GM18951 (cell line): ENCODE measurements at regions of chr1 and their contacts with region 1.

Region 1: GRCh38 chr1:173429471-173430402 is 47.4 kb upstream of the PRDX6 start:
- POLR2A ChIP-seq: no peak

Region 2: DNA sequence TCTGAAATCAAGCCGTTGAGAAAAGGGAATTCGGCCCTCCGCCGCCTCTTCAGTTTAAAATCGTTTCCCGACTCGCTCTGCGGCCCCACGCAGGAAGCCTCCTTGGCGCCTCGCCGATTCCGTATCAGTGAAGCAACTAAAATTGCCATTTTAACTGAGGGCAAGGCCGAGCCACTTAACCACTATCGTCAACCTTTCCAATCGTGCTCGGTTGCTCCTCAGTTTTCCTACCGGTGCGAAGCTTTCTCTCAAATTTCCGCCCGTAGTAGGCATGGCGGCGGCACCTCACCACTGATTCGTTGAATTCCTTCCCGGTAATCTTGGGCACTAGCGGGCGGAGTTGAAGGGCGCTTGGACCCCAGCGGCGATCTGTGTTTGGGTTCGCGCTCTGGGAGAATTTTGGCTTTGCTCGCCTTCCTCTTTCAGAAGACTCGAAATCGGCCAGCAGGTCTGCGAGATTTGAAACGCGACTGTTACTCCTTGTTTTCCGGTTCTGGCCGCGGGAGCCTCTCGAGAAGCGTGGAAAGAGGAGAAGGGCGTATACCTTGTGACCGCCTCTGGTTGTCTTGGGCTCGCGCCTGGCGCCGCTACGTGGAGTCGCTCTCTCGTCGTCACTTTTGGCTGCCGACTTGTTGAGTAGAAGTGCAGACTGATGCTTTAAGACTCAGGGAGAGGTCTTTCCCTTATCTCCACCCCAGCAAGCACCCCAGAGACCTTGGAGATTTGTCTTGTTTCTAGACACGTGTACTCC is 394.8 kb after region 1 on chr1 and contains the starts of genes CENPL and DARS2:
- in situ Hi-C with region 1: loop called (anchors 25 kb)
- POLR2A ChIP-seq: peak; percentile 64